Common myeloid progenitor, CD34-positive (primary cell): ENCODE measurements at regions of chr12 and their contacts with region 1.

Region 1: DNA sequence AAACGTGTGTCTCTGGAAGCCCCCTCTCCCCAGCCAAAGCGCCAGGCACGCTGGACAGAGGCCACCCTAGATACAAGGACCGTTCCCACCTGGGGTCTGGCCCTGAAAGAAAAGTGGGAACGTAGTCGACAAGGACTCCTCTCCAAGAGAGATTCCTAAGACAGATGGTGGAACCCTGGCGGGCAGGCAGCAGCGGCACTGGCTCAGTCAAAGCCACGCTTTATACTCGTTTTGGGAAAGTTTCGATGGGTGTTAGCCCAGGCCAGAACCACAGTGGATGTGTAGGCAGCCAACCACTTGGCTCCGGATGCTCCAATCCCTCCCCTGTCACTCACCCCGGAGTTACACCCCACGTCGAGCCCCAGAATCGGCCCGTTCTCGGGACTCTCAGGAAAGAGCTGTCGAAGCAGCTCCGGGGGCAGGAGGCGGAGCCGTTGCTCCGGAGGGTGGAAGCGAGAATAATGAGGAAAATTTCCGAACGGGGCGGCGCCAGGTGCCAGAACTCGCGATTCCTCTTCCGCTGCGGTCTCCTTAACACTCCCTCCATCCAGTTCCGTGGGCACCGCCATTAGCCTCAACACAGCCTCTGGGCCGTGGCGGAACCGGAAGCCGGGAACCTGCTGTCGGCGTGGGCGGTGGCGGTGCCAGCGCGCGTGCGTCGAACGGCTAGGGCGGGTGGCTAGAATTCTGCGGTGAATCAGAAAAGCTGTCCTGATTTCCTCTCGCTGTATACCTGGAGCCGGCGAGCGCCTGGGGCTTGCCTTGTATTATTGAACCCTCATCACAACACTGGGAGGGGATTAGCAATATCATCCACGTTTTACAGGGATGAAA is at the start of gene BCDIN3D:
- DNase-seq: peak; percentile 91 to 95 (median 93)
- H3K4me3 ChIP-seq: peak within 1 kb of the TSS; percentile 62 to 90 (median 84)
- H3K27ac ChIP-seq: peak within 1 kb of the TSS; percentile 64 to 86
- H3K4me1 ChIP-seq: peaks cover 7 to 40% (median 22%) of the 10 kb centered on the region in 4 experiments
- H3K27me3 ChIP-seq: no peaks in the 10 kb centered on the region

Region 2: DNA sequence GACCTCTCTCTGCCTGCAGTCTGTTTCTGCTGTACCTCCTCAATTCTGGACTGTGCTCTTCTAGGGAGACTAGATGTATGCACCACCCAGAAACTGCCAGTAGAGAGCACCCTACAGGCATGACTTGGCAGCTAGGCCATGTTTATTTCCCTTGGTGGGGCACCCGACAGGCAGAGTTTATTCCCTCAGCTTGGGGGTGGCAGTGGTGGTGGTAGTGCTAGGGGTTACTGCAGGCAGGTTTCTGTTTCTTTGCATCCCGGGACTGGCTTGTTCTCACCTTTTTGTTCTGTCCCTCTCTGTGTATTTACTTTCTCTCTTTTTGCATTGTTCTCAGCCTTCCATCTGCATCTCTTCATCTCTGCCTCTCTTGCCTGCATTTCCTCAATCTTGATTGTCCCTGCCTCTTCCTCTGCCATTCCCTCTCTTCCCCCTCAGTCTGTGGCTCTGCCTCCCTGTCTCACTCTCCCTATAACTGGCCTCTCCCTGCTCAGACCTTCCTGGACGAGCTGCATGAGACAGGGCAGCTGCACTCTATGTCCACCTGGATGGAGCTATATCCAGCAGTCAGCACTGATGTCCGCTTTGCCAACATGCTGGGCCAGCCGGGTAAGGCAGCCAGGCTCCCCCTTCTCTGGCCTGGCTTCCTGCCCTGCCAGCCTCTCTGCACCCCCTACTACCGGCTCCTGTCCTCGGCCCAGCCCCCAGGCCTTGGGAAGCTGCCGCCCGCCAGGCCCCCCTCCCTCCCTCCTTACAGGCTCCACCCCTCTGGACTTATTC is 205.6 kb before region 1 on chr12:
- CTCF ChIA-PET with region 1: interaction called, 19 read pairs
- POLR2A ChIA-PET with region 1: no interaction called
- DNase-seq: peak; percentile 69 to 85 (median 84)
- H3K4me3 ChIP-seq: peak overlapping the region in 3 of 7 experiments; percentile 1 to 61 (median 38)
- H3K27ac ChIP-seq: no peak overlapping the region
- H3K4me1 ChIP-seq: peaks cover 3 to 13% (median 7%) of the 10 kb centered on the region in 4 experiments
- H3K27me3 ChIP-seq: no peaks in the 10 kb centered on the region

Region 3: GRCh38 chr12:49763006-49763591 is 79.6 kb before region 1 on chr12:
- CTCF ChIA-PET with region 1: interaction called, 69 read pairs
- POLR2A ChIA-PET with region 1: no interaction called
- DNase-seq: peak; percentile 77 to 89 (median 85)
- H3K4me3 ChIP-seq: peak overlapping the region in 2 of 7 experiments; percentile 19 to 31
- H3K27ac ChIP-seq: peak overlapping the region in 1 of 2 experiments; percentile 36
- H3K4me1 ChIP-seq: peaks cover 23 to 36% (median 30%) of the 10 kb centered on the region in 4 experiments
- H3K27me3 ChIP-seq: no peaks in the 10 kb centered on the region

Region 4: DNA sequence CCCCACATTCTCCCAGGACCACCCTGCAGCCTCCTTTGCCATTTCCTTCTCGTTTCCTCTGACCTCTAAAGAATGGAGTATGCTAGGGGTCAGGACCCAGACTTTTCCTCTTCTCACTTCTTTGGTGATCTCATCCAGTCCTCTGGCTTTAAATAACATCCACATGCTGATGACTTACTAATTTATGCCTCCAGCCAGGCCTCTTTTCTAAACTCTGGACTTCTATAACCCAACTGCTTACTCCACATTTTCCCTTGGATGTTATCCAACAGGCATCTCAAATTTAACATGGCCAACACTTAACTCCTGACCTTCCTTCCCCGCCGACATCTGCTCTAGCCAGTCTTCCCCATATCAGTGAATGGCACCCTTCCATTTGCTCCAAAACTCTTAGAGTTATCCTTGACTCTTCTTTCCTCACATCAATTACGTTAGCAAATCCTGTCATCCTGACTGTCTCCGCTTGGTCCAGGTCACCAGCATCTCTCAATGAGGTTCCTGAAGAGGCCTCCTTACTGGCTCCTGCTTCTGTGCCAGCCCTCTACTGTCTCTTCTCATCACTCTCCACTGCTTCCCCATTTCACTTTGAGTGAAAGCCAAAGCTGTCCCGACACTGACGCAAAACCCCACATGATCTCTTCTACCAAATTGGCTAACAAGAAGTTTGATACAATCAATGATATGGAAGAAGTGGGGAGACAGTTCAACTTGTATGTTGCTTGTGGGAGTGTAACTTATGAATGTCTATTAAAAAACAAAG is 58.6 kb before region 1 on chr12:
- CTCF ChIA-PET with region 1: interaction called, 96 read pairs
- POLR2A ChIA-PET with region 1: interaction called, 3 read pairs
- DNase-seq: peak in 2 of 3 donors; percentile 55 to 63
- H3K4me3 ChIP-seq: no peak overlapping the region
- H3K27ac ChIP-seq: no peak overlapping the region
- H3K4me1 ChIP-seq: peaks cover 0 to 6% (median 2%) of the 10 kb centered on the region in 4 experiments
- H3K27me3 ChIP-seq: no peaks in the 10 kb centered on the region

Region 5: DNA sequence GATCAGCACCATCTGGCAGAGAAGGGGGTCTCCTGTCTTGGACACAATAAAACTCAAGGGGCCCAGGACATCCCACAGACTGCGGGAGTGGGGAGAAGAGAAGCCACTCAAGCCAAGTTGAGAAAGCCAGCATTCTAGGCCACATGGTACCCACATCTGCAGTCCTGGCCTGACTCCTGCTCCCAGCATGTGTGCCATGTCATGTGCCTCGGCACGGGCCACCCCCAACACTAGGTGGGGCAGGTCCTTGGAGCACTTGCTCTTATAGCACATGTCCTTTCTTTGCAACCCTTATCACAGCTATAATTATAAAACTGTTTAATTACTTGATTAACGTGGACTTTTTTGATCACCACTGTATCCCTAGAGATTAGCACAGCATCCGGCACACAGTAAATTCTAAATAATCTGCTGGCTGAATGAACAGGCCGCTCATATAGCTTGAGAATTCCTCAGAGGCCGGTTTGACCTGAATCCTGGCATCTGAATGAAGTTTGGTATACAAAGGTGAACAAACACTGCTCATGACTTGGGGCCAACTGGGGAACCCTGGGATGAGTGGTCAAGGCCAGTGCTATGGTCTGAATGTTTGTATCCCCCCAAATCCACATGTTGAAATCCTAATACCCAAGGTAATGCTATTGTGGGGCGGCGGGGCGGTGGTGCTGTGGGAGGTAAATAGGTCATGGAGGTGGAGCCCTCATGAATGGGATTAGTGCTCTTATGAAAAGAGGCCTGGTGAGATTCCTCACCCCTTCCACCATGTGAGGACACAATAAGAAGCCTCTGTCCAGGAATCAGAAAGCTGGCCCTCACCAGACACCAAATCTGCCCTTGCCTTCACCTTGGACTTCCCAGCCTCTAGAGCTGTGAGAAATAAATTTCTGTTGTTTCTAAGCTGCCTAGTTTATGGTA is 21.1 kb before region 1 on chr12:
- CTCF ChIA-PET with region 1: interaction called, 64 read pairs
- POLR2A ChIA-PET with region 1: no interaction called
- DNase-seq: no peak
- H3K4me3 ChIP-seq: peak overlapping the region in 2 of 7 experiments; percentile 25 to 27
- H3K27ac ChIP-seq: no peak overlapping the region
- H3K4me1 ChIP-seq: peaks cover 3 to 49% (median 28%) of the 10 kb centered on the region in 4 experiments
- H3K27me3 ChIP-seq: no peaks in the 10 kb centered on the region